ENCODE measurements at regions of chr16 and their contacts with region 1.

Region 1: DNA sequence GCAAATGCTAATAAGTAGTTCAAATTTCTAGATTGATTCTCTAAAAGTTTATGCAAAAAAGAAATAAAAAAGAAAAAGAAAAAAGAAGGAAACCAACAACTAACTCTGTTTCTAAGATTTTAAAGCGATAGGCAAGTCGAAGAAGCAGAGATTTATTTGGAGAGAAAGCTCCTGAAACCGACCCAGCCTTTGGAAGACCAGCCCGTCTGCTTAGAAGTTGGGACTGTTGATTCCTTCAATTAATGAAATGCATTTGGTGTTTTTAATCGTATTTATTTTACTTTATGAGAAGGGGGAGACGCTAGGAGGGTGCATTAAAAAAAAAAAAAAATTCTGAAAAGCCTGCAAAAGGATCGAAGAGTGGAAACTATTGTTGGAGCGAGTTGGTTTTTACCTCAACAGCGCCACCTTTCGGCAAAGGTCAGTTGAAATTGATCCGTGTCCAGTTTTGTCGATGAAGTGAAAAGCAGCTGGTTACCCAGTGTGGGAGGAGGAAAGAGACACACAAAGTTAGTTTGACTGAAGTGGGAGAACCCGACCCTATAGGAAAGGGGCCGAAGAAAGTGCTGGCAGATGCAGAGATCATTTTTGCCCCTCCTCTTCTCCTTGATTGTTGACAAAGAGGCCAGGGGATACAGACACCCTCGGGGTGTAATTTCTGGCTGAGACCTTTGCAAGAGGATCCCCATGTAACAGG is 1.5 kb upstream of the MAF start:
- DNase-seq: peak; percentile 26
- ATAC-seq: no peak
- H3K4me3 Mint-ChIP-seq: peak overlapping the region; percentile 90
- H3K27ac Mint-ChIP-seq: no peak overlapping the region
- H3K4me1 Mint-ChIP-seq: peaks cover 41% of the 10 kb centered on the region
- H3K27me3 Mint-ChIP-seq: peaks cover 44% of the 10 kb centered on the region
- CTCF ChIP-seq: peak; percentile 42

Region 2: GRCh38 chr16:78122774-78123315 is 1479.2 kb before region 1 on chr16:
- CTCF ChIA-PET with region 1: interaction called, 5 read pairs
- POLR2A ChIA-PET with region 1: no interaction called
- intact Hi-C with region 1: loop called (anchors 1 kb)
- DNase-seq: no peak
- ATAC-seq: peak; percentile 58
- H3K4me3 Mint-ChIP-seq: no peak overlapping the region
- H3K27ac Mint-ChIP-seq: no peak overlapping the region
- H3K4me1 Mint-ChIP-seq: peaks cover 3% of the 10 kb centered on the region
- H3K27me3 Mint-ChIP-seq: no peaks in the 10 kb centered on the region
- CTCF ChIP-seq: no peak

Region 3: GRCh38 chr16:78503602-78504001 is 1098.5 kb before region 1 on chr16:
- CTCF ChIA-PET with region 1: no interaction called
- POLR2A ChIA-PET with region 1: no interaction called
- intact Hi-C with region 1: loop called (anchors 1 kb)
- DNase-seq: no peak
- ATAC-seq: no peak
- H3K4me3 Mint-ChIP-seq: no peak overlapping the region
- H3K27ac Mint-ChIP-seq: no peak overlapping the region
- H3K4me1 Mint-ChIP-seq: no peaks in the 10 kb centered on the region
- H3K27me3 Mint-ChIP-seq: no peaks in the 10 kb centered on the region
- CTCF ChIP-seq: peak; percentile 31

Region 4: DNA sequence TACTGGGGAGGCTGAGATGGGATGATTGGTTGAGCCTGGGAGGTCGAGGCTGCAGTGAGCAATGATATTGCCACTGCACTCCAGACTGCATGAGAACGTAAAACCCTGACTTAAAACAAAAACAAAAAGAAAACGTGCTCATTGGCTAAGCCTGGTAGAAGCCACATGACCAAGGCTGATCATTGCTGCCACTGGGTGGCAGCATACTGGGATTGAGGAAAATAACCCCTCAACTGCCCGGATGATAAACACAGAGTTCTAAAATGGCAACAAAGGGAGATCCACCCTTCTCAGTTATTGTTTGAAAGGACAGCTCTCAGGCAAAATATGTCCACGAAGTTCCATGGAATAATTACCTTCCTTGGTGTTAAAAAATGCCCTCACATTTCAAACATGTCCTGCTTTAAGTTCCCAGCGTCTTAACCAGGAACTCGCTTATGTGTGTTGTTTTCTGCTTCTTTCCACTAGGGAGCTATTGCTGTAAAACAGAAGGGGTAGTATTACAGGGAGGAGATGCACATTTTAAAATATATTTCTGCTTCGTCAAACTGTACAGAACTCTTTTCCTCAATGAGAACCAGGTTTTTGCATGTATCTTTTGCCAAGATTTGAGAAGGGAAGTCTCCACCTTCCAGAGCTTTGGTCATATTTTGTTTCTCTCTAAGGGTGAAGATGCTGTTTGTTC is 676.9 kb before region 1 on chr16:
- CTCF ChIA-PET with region 1: no interaction called
- POLR2A ChIA-PET with region 1: no interaction called
- intact Hi-C with region 1: loop called (anchors 1 kb)
- DNase-seq: no peak
- ATAC-seq: no peak
- H3K4me3 Mint-ChIP-seq: no peak overlapping the region
- H3K27ac Mint-ChIP-seq: no peak overlapping the region
- H3K4me1 Mint-ChIP-seq: no peaks in the 10 kb centered on the region
- H3K27me3 Mint-ChIP-seq: no peaks in the 10 kb centered on the region
- CTCF ChIP-seq: no peak

Region 5: DNA sequence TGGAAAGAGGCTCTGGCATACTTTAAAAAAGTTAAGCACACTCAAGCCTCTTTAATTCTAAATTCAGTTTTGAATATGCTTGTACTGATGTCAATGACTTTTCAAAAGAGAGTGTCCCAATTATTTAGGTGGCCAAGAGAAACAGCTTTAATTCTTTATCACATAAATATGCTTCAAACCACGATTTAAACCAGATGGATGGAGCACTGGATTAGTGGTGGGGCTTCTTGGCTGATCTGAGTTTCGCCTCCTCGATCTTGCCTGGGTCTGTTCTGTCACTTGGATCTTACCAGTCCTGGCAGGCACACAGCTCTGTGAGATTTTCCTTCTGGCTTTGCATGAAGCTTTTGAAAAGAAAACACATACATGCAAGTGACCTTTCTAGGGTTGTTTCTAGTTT is 469.4 kb before region 1 on chr16:
- CTCF ChIA-PET with region 1: no interaction called
- POLR2A ChIA-PET with region 1: no interaction called
- intact Hi-C with region 1: loop called (anchors 5 kb)
- DNase-seq: no peak
- ATAC-seq: no peak
- H3K4me3 Mint-ChIP-seq: no peak overlapping the region
- H3K27ac Mint-ChIP-seq: no peak overlapping the region
- H3K4me1 Mint-ChIP-seq: no peaks in the 10 kb centered on the region
- H3K27me3 Mint-ChIP-seq: peaks cover 2% of the 10 kb centered on the region
- CTCF ChIP-seq: no peak

Region 6: GRCh38 chr16:79497606-79498350 is 104.3 kb before region 1 on chr16:
- CTCF ChIA-PET with region 1: no interaction called
- POLR2A ChIA-PET with region 1: no interaction called
- intact Hi-C with region 1: no loop called
- DNase-seq: no peak
- ATAC-seq: no peak
- H3K4me3 Mint-ChIP-seq: no peak overlapping the region
- H3K27ac Mint-ChIP-seq: no peak overlapping the region
- H3K4me1 Mint-ChIP-seq: no peaks in the 10 kb centered on the region
- H3K27me3 Mint-ChIP-seq: peaks cover 2% of the 10 kb centered on the region
- CTCF ChIP-seq: no peak

Region 7: GRCh38 chr16:79542237-79542774 is 59.8 kb before region 1 on chr16:
- CTCF ChIA-PET with region 1: no interaction called
- POLR2A ChIA-PET with region 1: no interaction called
- intact Hi-C with region 1: no loop called
- DNase-seq: no peak
- ATAC-seq: no peak
- H3K4me3 Mint-ChIP-seq: no peak overlapping the region
- H3K27ac Mint-ChIP-seq: no peak overlapping the region
- H3K4me1 Mint-ChIP-seq: no peaks in the 10 kb centered on the region
- H3K27me3 Mint-ChIP-seq: peaks cover 5% of the 10 kb centered on the region
- CTCF ChIP-seq: no peak

Region 8: GRCh38 chr16:79563921-79564320 is 38.2 kb before region 1 on chr16:
- CTCF ChIA-PET with region 1: no interaction called
- POLR2A ChIA-PET with region 1: no interaction called
- intact Hi-C with region 1: no loop called
- DNase-seq: no peak
- ATAC-seq: no peak
- H3K4me3 Mint-ChIP-seq: no peak overlapping the region
- H3K27ac Mint-ChIP-seq: no peak overlapping the region
- H3K4me1 Mint-ChIP-seq: no peaks in the 10 kb centered on the region
- H3K27me3 Mint-ChIP-seq: peaks cover 5% of the 10 kb centered on the region
- CTCF ChIP-seq: no peak

Region 9: DNA sequence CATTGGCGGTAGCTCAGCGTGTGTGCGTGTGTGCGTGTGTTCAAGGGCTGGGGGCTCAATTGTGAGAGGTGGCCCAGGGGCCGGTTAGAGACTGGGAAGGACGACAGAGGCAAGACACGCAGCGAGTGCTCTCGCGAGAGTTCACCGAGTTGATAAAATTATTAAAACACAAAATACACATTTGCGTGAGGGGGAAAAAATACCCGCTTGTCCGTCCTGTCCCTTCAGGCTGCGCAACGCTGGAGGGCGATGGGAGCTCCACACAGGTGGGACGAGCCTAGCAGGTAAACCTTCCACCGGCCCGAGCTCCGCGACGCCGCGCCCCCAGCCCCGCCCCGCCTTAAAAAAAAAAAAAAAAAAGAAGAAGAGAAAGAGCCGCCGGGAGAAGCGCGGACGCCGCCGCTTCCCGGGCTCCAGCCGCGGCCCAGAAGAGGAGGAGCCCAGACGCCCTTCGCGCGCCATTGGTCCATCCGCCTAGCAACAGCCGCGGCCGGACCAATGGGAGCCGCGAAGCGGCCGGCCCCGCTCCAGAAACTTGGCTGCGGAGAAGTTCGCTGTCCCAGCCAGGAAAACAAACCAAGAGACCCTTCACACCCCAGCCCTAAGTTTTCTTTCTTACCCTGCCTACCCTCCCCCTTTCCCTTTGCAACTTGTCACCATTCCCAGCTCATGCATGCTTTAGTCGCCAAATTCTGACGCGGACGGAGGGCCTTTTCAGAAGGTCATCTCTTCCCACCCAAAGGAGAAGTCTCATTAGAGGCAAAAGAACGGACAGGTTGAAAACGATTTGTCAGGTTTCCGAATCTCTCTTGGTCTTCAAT is 168.4 kb after region 1 on chr16:
- CTCF ChIA-PET with region 1: no interaction called
- POLR2A ChIA-PET with region 1: no interaction called
- intact Hi-C with region 1: loop called (anchors 5 kb)
- DNase-seq: peak; percentile 46
- ATAC-seq: peak; percentile 98
- H3K4me3 Mint-ChIP-seq: peak overlapping the region; percentile 87
- H3K27ac Mint-ChIP-seq: peak overlapping the region; percentile 15
- H3K4me1 Mint-ChIP-seq: peaks cover 31% of the 10 kb centered on the region
- H3K27me3 Mint-ChIP-seq: peaks cover 15% of the 10 kb centered on the region
- CTCF ChIP-seq: no peak

Region 10: DNA sequence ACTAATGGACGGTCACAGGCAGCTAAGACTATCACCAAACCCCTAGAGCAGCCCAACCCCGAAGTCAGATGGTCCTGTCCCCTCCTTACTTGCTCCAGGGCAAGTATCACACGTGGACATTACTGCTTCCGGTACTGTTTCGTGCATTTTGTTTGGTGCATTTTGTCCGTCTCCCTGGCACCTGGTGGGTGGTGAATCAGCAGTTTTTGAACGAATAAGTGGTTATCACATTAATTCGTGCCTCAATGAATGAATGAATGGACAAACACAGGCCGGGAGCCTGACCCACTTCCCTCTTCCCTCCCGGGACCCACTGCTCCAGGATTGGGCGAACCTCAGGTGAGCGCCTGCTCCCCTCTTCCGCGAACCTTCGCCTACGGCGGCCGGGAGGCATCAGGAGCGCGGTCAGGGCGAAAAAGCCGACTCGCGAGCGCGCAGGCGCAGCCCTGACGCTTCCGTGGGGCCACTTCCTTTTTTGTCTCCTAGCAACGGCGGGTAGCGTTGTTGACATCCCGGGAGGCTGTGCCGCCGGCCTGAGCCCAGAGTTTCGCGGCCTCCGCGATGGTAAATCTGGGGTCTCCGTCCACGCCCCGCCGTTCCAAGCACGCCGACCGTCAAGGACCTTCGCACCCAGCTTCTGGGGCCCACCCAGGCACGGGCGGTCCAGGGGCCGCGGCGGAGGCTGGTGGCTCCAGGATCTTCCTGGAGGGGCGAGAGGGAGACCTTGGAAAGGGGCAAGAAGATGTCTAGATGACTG is 938.6 kb after region 1 on chr16 and contains the start of gene DYNLRB2:
- CTCF ChIA-PET with region 1: no interaction called
- POLR2A ChIA-PET with region 1: no interaction called
- intact Hi-C with region 1: loop called (anchors 5 kb)
- DNase-seq: peak; percentile 90
- ATAC-seq: peak; percentile 92
- H3K4me3 Mint-ChIP-seq: peak within 1 kb of the TSS; percentile 96
- H3K27ac Mint-ChIP-seq: peak within 1 kb of the TSS; percentile 96
- H3K4me1 Mint-ChIP-seq: peaks cover 16% of the 10 kb centered on the region
- H3K27me3 Mint-ChIP-seq: peaks cover 7% of the 10 kb centered on the region
- CTCF ChIP-seq: no peak
- total RNA-seq, gene DYNLRB2: 0.71 TPM in 1 of 2 replicates, not detected in the other